Endothelial cell of umbilical vein (primary cell): ENCODE measurements at regions of chr9 and their contacts with region 1.

Region 1: GRCh38 chr9:79757881-79758669 is 186.3 kb downstream of the TLE4 start:
- DNase-seq: peak; percentile 31
- H3K4me3 ChIP-seq: no peak overlapping the region
- H3K27ac ChIP-seq: no peak overlapping the region
- H3K4me1 ChIP-seq: no peaks in the 10 kb centered on the region
- H3K27me3 ChIP-seq: no peaks in the 10 kb centered on the region
- CTCF ChIP-seq: peak; percentile 18 to 39
- POLR2A ChIP-seq: no peak

Region 2: DNA sequence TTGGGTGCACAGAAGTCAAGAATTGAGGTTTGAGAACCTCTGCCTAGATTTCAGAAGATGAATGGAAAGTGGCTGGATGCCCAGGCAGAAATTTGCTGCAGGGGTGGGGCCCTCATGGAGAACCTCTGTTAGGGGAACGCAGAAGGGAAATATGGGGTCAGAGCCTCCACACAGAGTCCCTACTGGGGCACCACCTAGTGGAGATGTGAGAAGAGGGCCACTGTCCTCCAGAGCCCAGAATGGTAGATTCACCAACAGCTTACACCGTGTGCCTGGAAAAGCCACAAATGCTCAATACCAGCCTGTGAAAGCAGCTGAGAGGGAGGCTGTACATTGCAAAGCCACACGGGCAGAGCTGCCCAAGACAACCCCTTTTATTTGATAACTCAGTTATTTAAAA is 197.2 kb after region 1 on chr9:
- CTCF ChIA-PET with region 1: interaction called, 5 read pairs
- POLR2A ChIA-PET with region 1: no interaction called
- dilution Hi-C with region 1: no loop called
- intact Hi-C with region 1: loop called (anchors 1 kb)
- DNase-seq: no peak
- H3K4me3 ChIP-seq: no peak overlapping the region
- H3K27ac ChIP-seq: no peak overlapping the region
- H3K4me1 ChIP-seq: no peaks in the 10 kb centered on the region
- H3K27me3 ChIP-seq: no peaks in the 10 kb centered on the region
- CTCF ChIP-seq: peak; percentile 18 to 43
- POLR2A ChIP-seq: no peak

Region 3: DNA sequence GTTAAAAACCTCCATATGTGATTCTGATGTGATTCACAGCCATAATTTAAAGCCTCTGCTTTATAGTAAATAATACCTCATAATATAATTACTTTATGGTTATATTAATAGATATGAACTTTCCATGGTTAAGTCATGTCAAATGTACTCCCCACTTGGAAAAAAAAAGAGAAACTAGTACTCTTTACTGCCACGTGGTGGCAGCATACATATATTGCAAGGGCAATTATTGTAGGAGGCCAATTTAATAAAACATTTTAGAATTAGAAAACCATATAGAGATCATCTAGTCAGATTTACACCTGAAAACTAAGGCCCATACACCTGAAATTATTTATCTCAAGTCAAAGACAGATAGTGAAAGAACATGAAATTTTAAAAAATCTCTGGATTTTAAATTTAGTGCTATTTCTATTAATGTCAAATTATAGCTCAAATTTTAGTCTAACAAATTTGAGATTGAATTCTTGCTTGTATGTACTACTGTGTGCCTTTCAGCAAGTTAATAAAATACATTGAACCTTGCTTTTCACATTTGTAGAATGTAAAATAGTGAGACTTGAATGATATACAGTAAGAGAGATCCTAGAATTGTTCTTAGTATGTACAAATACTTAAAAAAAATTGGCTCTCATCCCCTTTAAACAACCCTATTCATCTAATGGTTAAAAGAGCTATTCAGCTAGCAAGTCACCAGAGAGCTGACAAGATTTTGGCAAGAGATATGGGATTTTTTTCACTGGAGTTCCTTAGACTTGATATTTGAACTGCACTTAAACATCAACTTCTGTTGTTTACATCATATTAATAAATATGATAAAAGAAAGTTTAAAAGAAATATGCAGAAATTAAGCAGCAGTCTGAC is 417.4 kb after region 1 on chr9:
- CTCF ChIA-PET with region 1: interaction called, 7 read pairs
- POLR2A ChIA-PET with region 1: no interaction called
- dilution Hi-C with region 1: no loop called
- intact Hi-C with region 1: loop called (anchors 5 kb)
- DNase-seq: peak; percentile 45
- H3K4me3 ChIP-seq: no peak overlapping the region
- H3K27ac ChIP-seq: no peak overlapping the region
- H3K4me1 ChIP-seq: no peaks in the 10 kb centered on the region
- H3K27me3 ChIP-seq: no peaks in the 10 kb centered on the region
- CTCF ChIP-seq: peak; percentile 33 to 40
- POLR2A ChIP-seq: no peak